K562 (cell line): ENCODE measurements at regions of chr7 and their contacts with region 1.

Region 1: DNA sequence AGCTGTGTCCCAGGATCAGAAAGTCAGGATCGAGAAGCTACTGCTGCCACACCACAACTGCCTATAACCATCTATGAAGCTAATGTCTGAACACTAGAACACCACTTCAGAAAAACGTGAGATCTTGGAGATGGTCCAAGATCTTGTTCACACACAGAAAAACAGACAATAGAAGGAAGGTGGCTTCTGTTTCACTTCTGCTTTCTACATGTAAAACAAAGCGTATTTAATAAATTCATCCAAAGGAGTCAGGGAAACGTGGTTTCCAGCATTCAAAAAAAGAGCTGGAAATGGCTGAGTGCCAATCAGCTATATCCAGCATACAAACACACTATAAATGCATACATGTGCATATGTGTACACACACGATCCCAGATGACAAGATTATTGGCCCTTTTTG is 70.2 kb upstream of the CCDC71L start:
- DNase-seq: no peak
- ATAC-seq: no peak; the same call in 2 of the 3 replicates
- H3K4me3 ChIP-seq: no peak overlapping the region
- H3K27ac ChIP-seq: no peak overlapping the region
- H3K4me1 ChIP-seq: peaks cover 0 to 23% of the 10 kb centered on the region in 2 experiments; a peak in 3 of 5 replicates
- H3K27me3 ChIP-seq: no peaks in the 10 kb centered on the region
- CTCF ChIP-seq: no peak
- EP300 ChIP-seq: no peak
- POLR2A ChIP-seq: no peak
- RAD21 ChIP-seq: no peak

Region 2: DNA sequence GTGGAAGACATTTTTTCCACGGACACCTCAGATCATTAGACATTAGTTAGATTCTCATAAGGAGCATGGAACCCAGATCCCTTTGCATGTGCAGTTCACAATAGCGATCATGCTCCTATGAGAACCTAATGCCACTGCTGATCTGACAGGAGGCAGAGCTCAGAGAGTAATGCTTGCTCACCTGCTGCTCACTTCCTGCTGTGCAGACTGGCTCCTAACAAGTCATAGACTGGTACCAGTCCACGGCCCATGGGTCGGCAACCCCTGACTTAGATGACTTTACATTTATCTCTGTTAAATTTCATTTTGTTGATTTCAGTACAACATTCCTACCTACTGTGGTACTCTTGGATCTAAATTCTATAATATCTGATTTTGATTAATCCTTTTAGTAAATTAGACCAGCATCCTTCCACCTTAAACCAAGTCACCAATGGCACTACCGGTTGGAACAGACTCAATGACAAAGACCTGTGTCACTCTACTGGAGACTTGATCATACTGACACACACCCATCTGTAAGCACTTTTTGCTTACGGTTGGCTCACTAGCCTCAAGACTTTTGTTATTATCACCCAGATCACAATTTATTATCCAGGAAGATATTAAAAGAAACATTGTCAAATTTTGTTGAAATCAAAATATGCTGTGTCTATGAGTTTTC is 62.2 kb before region 1 on chr7:
- CTCF ChIA-PET with region 1: no interaction called
- POLR2A ChIA-PET with region 1: no interaction called
- in situ Hi-C with region 1: loop called (anchors 5 kb)
- intact Hi-C with region 1: loop called (anchors 2 kb)
- DNase-seq: no peak
- ATAC-seq: peak; percentile 42; the same call in 2 of the 3 replicates
- H3K4me3 ChIP-seq: no peak overlapping the region
- H3K27ac ChIP-seq: no peak overlapping the region
- H3K4me1 ChIP-seq: peaks cover 0 to 2% of the 10 kb centered on the region in 2 experiments; a peak in 2 of 5 replicates
- H3K27me3 ChIP-seq: no peaks in the 10 kb centered on the region
- CTCF ChIP-seq: no peak
- EP300 ChIP-seq: no peak
- POLR2A ChIP-seq: no peak
- RAD21 ChIP-seq: no peak